ENCODE measurements at regions of chr14 and their contacts with region 1.

Region 1: DNA sequence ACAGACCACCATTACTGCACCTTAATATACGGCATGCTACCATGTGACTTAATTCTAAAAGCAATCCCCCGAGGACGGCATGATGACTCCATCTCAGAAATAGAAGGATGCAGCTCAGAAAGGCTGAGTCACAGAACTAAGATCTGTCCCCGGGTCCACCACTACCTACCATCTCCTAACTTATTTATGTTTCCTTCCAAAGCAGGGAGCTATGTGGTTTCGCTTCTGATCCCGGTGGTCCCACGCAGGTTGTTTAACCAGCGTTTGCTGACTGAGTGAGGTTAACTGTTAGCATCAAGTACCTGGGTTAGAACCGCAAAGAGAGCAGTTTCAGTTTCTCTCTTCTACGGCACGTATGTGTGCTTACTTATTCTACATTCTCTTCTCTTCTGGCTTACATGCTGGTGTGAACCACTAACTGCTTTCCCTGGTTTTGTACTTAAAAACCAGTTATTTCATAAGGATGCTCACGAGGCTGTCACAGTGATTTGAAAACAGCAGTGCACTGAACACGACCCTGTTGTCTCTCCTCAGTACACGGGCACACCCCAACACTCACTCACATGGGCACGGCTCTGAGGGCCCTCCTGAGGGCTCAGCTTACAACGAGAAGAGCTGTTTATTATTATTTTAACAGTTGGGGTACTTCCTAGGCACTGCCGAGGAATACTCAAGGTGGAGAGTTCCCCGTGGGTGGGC is 66.7 kb downstream of the CCDC88C start:
- DNase-seq: peak in 25 of 35 experiments; percentile 28 to 84 (median 47)
- ATAC-seq: peak; percentile 62 to 75 (median 72)
- H3K4me3 ChIP-seq: peak overlapping the region; percentile 31 to 55
- H3K4me3 Mint-ChIP-seq: peak overlapping the region; percentile 82 to 87 (median 83)
- H3K27ac ChIP-seq: peak overlapping the region; percentile 87
- H3K27ac Mint-ChIP-seq: peak overlapping the region; percentile 96 to 98
- H3K4me1 ChIP-seq: peaks cover 51 to 90% of the 10 kb centered on the region in 2 experiments
- H3K4me1 Mint-ChIP-seq: peaks cover 86 to 98% (median 95%) of the 10 kb centered on the region in 3 donors
- H3K27me3 ChIP-seq: no peaks in the 10 kb centered on the region
- H3K27me3 Mint-ChIP-seq: no peaks in the 10 kb centered on the region

Region 2: DNA sequence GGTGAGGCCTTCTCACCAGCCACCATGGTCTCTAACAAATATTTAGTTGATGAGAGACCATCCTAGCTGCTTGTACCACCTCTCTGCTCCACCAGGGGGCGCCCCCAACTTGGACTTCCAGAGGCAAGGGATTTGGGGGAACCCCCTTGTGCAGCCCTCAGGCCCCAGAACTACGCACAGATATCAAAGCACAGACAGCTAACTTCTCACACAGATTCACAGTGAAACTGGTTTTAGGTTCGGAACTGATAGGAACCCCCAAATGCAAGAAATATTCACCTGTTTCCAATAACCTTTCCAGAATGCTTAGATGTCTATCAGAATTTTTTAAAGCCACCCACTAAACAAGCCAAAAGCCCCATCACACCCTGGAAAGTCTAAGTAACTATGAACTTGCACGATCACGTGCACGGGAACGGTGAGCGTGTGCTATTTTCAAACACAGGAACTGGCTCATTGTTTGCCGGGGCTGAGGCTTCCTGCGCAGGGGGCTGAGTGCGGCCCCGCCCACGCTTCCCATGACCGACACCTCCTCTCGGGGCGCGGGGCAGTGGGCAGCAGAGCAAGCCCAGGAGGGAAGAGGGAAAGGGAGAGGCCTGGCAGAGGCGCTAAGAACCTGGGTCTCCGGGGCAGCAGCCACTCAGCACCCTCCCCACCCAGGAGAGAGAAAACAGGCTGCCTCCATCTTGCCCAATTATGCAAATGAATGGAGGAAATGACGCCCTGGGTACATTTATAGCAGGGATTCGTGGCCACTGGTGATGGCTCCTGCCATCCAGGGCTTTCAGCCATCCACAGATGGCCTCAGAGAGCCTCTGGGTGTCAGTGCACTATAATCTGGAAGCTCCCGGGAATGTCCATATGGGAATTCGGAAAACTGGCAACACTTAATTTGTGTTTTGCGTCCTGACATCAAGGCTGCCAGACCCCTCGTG is 27.0 kb before region 1 on chr14:
- CTCF ChIA-PET with region 1: interaction called, 5 to 29 read pairs
- POLR2A ChIA-PET with region 1: interaction called, 3 to 8 read pairs
- DNase-seq: peak; percentile 86 to 96 (median 94)
- ATAC-seq: peak; percentile 83 to 88 (median 84)
- H3K4me3 ChIP-seq: peak overlapping the region; percentile 28 to 43
- H3K4me3 Mint-ChIP-seq: peak overlapping the region; percentile 78 to 85 (median 80)
- H3K27ac ChIP-seq: peak overlapping the region; percentile 98
- H3K27ac Mint-ChIP-seq: peak overlapping the region; percentile 96 to 98
- H3K4me1 ChIP-seq: peaks cover 51 to 97% of the 10 kb centered on the region in 2 experiments
- H3K4me1 Mint-ChIP-seq: peaks cover 84 to 86% (median 86%) of the 10 kb centered on the region in 3 donors
- H3K27me3 ChIP-seq: no peaks in the 10 kb centered on the region
- H3K27me3 Mint-ChIP-seq: no peaks in the 10 kb centered on the region

Region 3: DNA sequence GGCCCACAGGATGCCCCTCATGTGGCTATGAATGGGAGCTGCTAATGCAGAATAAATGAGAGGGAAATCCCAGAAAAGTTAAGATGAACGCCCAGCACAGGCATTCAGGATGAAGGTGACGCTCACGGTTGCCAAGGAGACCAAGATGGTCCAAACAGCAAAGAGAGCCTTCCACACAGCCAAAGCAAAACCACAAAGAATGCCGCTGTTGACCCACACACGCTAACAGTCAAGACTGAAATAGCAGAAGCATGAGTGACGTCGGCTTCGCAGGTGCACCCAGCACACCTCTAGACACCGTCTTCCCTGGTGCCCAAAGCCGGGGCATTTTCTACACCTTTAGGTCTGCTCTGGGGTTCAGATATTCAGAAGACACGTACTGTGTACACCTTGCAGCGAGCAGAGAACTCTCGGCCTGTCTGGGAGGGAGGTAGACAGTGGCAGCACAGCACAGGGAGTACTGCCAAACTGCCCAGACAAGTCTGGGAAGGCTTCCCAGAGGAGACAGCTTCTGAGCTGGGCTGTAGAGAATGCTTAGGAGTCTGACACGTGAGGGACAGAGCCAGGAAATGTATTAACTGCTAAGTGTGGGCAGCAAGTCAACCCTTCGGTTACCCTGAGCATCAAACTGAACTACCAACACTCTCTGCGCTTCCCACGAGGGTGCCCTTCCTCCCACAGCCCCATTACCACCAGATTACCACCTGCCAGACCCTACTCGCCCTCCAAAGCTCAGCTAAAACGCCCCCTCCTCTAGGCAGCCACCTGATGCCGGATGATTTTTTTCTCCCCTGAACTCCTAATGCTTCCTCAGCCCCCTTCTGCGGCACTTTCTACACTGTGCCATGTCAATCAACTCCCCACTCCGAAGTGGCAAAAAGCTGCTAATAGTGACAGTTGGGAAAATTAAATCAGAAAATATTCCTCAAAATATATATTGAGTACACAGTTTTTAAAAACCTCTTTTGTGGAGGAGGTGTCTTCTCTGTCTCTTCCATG is 16.5 kb after region 1 on chr14:
- CTCF ChIA-PET with region 1: interaction called in 1 of 2 experiments, 10 read pairs
- POLR2A ChIA-PET with region 1: interaction called, 3 to 4 read pairs
- DNase-seq: peak in 32 of 35 experiments; percentile 38 to 94 (median 69)
- ATAC-seq: peak; percentile 56 to 85 (median 70)
- H3K4me3 ChIP-seq: peak overlapping the region; percentile 17 to 20
- H3K4me3 Mint-ChIP-seq: peak overlapping the region; percentile 64 to 84 (median 73)
- H3K27ac ChIP-seq: peak overlapping the region; percentile 87
- H3K27ac Mint-ChIP-seq: peak overlapping the region; percentile 92 to 93
- H3K4me1 ChIP-seq: peaks cover 67 to 96% of the 10 kb centered on the region in 2 experiments
- H3K4me1 Mint-ChIP-seq: peaks cover 83 to 95% (median 91%) of the 10 kb centered on the region in 3 donors
- H3K27me3 ChIP-seq: no peaks in the 10 kb centered on the region
- H3K27me3 Mint-ChIP-seq: no peaks in the 10 kb centered on the region

Region 4: DNA sequence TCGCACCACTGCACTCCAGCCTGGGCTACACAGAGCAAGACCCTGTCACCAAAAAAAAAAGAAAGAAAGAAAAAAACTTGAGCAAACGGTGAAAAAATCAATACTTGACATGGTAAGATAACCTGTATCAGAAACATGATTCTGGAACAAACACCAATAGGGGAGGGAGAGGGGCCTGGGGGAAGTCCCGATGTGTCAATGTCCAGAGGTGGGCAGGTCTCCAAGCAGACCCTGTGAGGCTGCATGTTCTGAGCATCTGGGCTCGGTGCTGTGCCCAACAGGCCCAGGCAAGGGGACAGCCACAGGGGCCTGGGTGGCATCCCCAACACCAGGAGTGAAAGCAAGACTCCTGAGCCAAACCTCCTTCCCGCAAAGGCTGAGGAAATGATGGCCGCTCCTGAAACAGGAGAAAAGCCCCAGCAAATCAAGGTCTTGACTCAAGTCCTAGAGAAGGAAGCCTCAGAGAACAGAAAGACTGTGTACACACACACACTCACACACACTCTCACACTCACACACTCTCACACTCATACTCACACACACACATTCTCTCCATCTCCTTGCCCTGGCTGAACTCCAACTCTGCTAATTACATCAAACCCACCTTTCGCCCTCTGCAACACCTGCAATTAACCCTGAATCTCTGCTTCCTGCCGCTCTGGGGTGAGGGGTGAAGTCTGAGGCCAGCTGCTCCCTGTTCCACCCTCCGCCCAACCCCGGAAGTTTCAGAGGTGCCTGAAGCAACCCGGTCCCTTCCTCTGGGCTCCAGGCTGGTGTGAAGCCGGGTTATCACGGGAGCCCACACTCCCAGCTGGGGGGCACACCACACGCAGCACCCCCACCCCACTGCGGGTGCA is 46.2 kb after region 1 on chr14:
- CTCF ChIA-PET with region 1: interaction called, 7 to 15 read pairs
- POLR2A ChIA-PET with region 1: interaction called in 1 of 2 experiments, 5 read pairs
- DNase-seq: peak in 34 of 35 experiments; percentile 44 to 75 (median 62)
- ATAC-seq: peak; percentile 69 to 81 (median 77)
- H3K4me3 ChIP-seq: peak overlapping the region; percentile 30 to 49
- H3K4me3 Mint-ChIP-seq: peak overlapping the region; percentile 71 to 98 (median 98)
- H3K27ac ChIP-seq: peak overlapping the region; percentile 85
- H3K27ac Mint-ChIP-seq: peak overlapping the region; percentile 91 to 92
- H3K4me1 ChIP-seq: peaks cover 79 to 95% of the 10 kb centered on the region in 2 experiments
- H3K4me1 Mint-ChIP-seq: peaks cover 96 to 99% (median 96%) of the 10 kb centered on the region in 3 donors
- H3K27me3 ChIP-seq: no peaks in the 10 kb centered on the region
- H3K27me3 Mint-ChIP-seq: no peaks in the 10 kb centered on the region

Region 5: DNA sequence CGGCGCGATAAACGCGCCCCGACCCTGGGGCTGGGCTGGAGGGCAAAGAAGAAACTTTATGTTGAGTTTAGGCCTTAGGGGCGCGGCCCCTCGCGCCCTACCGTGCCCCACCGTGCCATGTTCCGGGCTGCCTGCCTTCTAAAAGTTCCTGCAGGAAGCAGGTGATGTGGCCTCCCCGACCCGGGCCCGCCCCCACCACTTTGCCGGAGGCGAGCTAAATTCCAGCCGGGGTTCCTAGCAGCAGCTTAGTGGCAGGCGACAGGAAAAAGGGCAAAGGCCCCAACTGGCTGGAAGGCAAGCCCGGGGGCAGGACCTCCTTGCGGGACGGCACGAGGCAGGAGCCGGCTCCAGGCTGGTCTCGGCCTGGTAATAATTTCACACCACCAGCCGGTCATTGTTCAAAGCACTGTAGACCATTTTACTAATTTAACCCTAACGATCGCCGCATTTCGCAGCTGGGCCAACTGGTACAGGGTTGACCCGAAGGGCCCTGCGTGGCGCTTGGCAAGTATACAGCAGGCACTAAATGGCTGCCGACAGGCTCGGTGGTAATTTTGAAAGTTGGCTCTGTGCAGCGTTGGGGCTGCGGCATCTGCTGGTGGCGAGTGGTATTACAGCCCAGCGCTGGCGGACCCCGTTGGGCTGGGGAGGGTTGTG is 67.6 kb after region 1 on chr14:
- CTCF ChIA-PET with region 1: interaction called in 1 of 2 experiments, 17 read pairs
- POLR2A ChIA-PET with region 1: interaction called in 1 of 2 experiments, 10 read pairs
- DNase-seq: peak in 34 of 35 experiments; percentile 53 to 91 (median 74)
- ATAC-seq: peak; percentile 17 to 34 (median 22)
- H3K4me3 ChIP-seq: peak overlapping the region; percentile 17 to 50
- H3K4me3 Mint-ChIP-seq: peak overlapping the region; percentile 75 to 84 (median 81)
- H3K27ac ChIP-seq: peak overlapping the region; percentile 69
- H3K27ac Mint-ChIP-seq: peak overlapping the region; percentile 90 to 96
- H3K4me1 ChIP-seq: peaks cover 16 to 38% of the 10 kb centered on the region in 2 experiments
- H3K4me1 Mint-ChIP-seq: peaks cover 31 to 40% (median 39%) of the 10 kb centered on the region in 3 donors
- H3K27me3 ChIP-seq: no peaks in the 10 kb centered on the region
- H3K27me3 Mint-ChIP-seq: no peaks in the 10 kb centered on the region

Measured in T-cell (primary cell).